ENCODE measurements at regions of chr5 and their contacts with region 1.

Region 1: GRCh38 chr5:43000111-43000845 is 39.8 kb downstream of the ANXA2R start:
- DNase-seq: no peak
- H3K4me3 ChIP-seq: peak overlapping the region in 36 of 59 donors; percentile 0 to 48 (median 23)
- H3K27ac ChIP-seq: peak overlapping the region in 2 of 59 donors; percentile 17 to 30
- H3K27me3 ChIP-seq: peaks cover 2 to 100% (median 88%) of the 10 kb centered on the region in 45 donors
- CTCF ChIP-seq: no peak

Region 2: GRCh38 chr5:42745426-42745825 is 254.9 kb before region 1 on chr5:
- intact Hi-C with region 1: loop called in 1 of 2 experiments (anchors 5 kb)
- DNase-seq: peak in 1 of 10 donors; percentile 29
- H3K4me3 ChIP-seq: no peak overlapping the region
- H3K27ac ChIP-seq: no peak overlapping the region
- H3K27me3 ChIP-seq: no peaks in the 10 kb centered on the region
- CTCF ChIP-seq: peak in 48 of 56 donors; percentile 15 to 65 (median 48)

Region 3: GRCh38 chr5:43207601-43208000 is 207.3 kb after region 1 on chr5:
- intact Hi-C with region 1: no loop called
- DNase-seq: no peak
- H3K4me3 ChIP-seq: no peak overlapping the region
- H3K27ac ChIP-seq: no peak overlapping the region
- H3K27me3 ChIP-seq: no peaks in the 10 kb centered on the region
- CTCF ChIP-seq: no peak